Activated CD8-positive, alpha-beta T cell treated with anti-CD3 and anti-CD28 coated beads for 36 hours (primary cell): ENCODE measurements at regions of chr4 and their contacts with region 1.

Region 1: DNA sequence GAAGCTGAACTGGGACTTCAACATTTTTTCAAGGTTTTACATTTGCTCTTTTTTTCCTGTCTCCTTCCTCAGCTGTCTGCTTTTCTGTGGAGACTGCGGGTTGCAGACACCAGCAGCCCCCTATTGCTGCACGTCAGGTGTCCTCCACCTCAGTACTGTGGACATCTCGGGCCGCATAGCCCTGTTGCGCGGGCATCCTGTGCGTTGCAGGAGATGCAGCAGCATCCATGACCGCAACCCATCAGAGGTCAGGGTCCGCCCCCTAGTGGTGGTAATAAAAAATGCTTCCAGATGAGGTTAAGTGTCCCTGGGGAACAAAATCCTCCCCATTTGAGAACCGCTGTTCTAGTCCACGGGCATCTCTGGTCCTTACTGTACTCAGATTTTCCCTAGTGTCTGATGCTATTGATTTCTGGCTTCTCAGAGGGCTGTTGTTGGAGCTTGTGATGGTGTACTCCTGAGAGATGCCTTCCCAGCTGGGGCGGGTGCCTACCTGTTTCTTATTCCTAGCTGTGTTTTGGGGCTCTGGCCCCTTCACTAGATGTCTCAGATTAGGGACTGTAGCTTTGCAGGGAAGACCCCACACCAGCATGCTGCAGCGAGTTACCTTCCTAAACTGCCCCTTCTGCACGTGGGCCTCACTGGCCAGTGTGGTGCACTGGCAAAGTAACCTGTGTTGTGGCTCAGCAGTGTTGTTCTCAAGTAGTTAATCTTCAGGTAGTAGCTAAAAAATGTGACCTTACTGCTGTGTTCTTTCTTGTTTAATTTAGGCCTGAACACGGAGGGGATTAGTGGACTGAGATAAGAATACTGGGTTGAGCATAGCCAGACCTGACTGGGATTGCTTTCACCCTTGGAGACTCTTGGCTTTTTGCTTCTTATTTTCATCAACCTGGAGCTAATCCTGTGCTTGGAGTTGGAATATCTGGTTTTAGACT is 28.2 kb downstream of the NSD2 start:
- DNase-seq: peak; percentile 83
- ATAC-seq: peak; percentile 95
- H3K4me3 Mint-ChIP-seq: no peak overlapping the region
- H3K27ac Mint-ChIP-seq: peak overlapping the region; percentile 65
- H3K4me1 Mint-ChIP-seq: peaks cover 18% of the 10 kb centered on the region
- H3K27me3 Mint-ChIP-seq: no peaks in the 10 kb centered on the region
- CTCF ChIP-seq: peak; percentile 86

Region 2: GRCh38 chr4:1233641-1234308 is 665.6 kb before region 1 on chr4:
- CTCF ChIA-PET with region 1: no interaction called
- POLR2A ChIA-PET with region 1: no interaction called
- intact Hi-C with region 1: no loop called
- DNase-seq: no peak
- ATAC-seq: no peak
- H3K4me3 Mint-ChIP-seq: no peak overlapping the region
- H3K27ac Mint-ChIP-seq: no peak overlapping the region
- H3K4me1 Mint-ChIP-seq: peaks cover 2% of the 10 kb centered on the region
- H3K27me3 Mint-ChIP-seq: no peaks in the 10 kb centered on the region
- CTCF ChIP-seq: no peak

Region 3: GRCh38 chr4:1809754-1810511 is 89.5 kb before region 1 on chr4:
- CTCF ChIA-PET with region 1: interaction called, 12 read pairs
- POLR2A ChIA-PET with region 1: no interaction called
- intact Hi-C with region 1: no loop called
- DNase-seq: peak; percentile 83
- ATAC-seq: peak; percentile 95
- H3K4me3 Mint-ChIP-seq: no peak overlapping the region
- H3K27ac Mint-ChIP-seq: no peak overlapping the region
- H3K4me1 Mint-ChIP-seq: no peaks in the 10 kb centered on the region
- H3K27me3 Mint-ChIP-seq: no peaks in the 10 kb centered on the region
- CTCF ChIP-seq: peak; percentile 98

Region 4: GRCh38 chr4:1862055-1862926 is 37.1 kb before region 1 on chr4:
- CTCF ChIA-PET with region 1: interaction called, 25 read pairs
- POLR2A ChIA-PET with region 1: interaction called, 4 read pairs
- intact Hi-C with region 1: loop called (anchors 10 kb)
- DNase-seq: peak; percentile 60
- ATAC-seq: peak; percentile 74
- H3K4me3 Mint-ChIP-seq: peak overlapping the region; percentile 73
- H3K27ac Mint-ChIP-seq: peak overlapping the region; percentile 85
- H3K4me1 Mint-ChIP-seq: peaks cover 26% of the 10 kb centered on the region
- H3K27me3 Mint-ChIP-seq: no peaks in the 10 kb centered on the region
- CTCF ChIP-seq: no peak

Region 5: GRCh38 chr4:1883583-1883982 is 15.8 kb before region 1 on chr4:
- CTCF ChIA-PET with region 1: interaction called, 81 read pairs
- POLR2A ChIA-PET with region 1: interaction called, 4 read pairs
- intact Hi-C with region 1: no loop called
- DNase-seq: no peak
- ATAC-seq: no peak
- H3K4me3 Mint-ChIP-seq: no peak overlapping the region
- H3K27ac Mint-ChIP-seq: no peak overlapping the region
- H3K4me1 Mint-ChIP-seq: peaks cover 30% of the 10 kb centered on the region
- H3K27me3 Mint-ChIP-seq: no peaks in the 10 kb centered on the region
- CTCF ChIP-seq: no peak

Region 6: GRCh38 chr4:1928356-1929239 is 29.2 kb after region 1 on chr4:
- CTCF ChIA-PET with region 1: interaction called, 11 read pairs
- POLR2A ChIA-PET with region 1: no interaction called
- intact Hi-C with region 1: no loop called
- DNase-seq: peak; percentile 21
- ATAC-seq: no peak
- H3K4me3 Mint-ChIP-seq: no peak overlapping the region
- H3K27ac Mint-ChIP-seq: no peak overlapping the region
- H3K4me1 Mint-ChIP-seq: peaks cover 5% of the 10 kb centered on the region
- H3K27me3 Mint-ChIP-seq: no peaks in the 10 kb centered on the region
- CTCF ChIP-seq: no peak